Right ventricle myocardium inferior (tissue), 1 donor: ENCODE measurements at regions of chr1 and their contacts with region 1.

Region 1: DNA sequence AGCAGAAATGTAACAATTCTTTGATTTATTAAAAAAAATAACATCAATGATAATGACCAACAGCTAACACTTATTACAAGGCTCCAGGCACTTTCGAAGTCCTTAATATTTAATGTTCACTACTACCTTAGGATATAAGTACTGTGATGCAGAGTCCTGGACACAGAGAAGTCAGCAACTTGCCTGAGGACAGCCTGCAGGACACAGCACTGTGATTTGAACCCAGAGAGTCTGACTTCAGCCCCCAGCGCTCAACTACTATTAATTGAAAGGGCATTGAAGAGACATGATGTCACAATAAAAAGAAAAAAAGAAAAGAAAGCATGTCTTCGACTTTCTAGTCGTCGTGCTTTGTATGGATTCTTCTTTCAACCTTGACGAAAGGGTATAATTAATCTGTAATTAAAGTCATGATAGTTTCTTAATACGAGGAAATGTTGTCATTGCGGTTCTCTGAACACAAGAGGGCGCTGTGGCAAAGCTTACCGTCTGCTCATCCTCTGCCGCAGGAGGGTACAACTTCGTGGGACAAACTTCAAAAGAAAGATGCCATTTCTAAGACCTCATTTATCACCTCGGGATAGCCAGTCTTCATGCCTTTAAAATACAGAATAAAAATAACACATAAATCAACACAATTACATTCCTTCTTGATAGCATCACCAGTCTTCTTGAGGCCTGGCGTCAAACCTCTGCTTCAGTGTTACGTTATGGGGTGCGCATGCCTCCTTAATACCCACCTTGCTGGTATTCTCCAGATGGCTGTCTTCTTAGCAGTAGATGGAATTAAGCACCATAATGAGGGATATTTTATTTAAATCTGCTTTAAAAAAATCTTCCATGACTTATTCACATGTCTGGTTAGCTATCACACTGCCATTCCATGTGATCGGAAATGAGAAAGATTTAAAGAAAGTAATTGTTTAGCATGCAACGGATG is 240.1 kb downstream of the DISC1 start:
- DNase-seq: no peak
- ATAC-seq: no peak

Region 2: DNA sequence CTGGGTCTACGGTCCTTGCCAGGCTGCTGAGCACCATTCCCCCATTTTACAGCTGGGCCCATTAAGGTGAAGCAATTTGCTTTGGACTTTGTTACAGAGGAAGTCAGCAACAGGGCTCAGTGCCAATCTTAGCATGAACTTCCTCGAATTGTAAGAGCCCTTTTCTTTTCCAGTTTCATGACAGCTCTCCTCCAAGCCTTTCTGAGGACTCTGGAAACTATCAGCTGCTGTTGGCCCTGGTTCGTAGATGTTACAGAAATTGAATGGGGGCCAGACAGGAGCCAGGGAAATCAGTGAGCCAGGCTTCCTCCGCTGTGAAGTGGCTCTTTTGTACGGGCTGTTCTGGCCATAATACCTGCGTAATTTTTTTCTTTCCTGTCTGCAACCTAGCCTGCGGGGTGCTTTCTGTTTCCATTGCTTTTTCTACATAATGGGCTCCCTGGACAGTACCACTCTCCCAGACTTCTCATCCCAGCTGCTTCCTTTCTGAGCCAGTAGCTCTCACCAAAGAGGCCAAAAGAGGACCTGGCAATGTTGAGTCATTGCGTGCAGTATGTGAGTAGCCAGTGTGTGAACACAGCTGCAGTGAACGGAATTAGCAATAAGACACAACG is 146.2 kb after region 1 on chr1:
- intact Hi-C with region 1: loop called (anchors 5 kb)
- DNase-seq: no peak
- ATAC-seq: peak; percentile 95